HepG2 (cell line): ENCODE measurements at regions of chr6 and their contacts with region 1.

Region 1: GRCh38 chr6:167291623-167292300 is 647 bp downstream of the UNC93A start:
- DNase-seq: peak; percentile 77
- ATAC-seq: peak; percentile 48
- H3K4me3 ChIP-seq: peak overlapping the region; percentile 38 to 53 (median 38); a peak in 4 of 6 replicates
- H3K27ac ChIP-seq: peak overlapping the region; percentile 77
- H3K4me1 ChIP-seq: peaks cover 75% of the 10 kb centered on the region
- H3K27me3 ChIP-seq: no peaks in the 10 kb centered on the region
- CTCF ChIP-seq: peak; percentile 34; the same call in 1 of the 2 replicates
- EP300 ChIP-seq: peak in 1 of 2 experiments; percentile 63; a peak in 1 of 4 replicates
- POLR2A ChIP-seq: no peak; a peak in 1 of 4 replicates
- RAD21 ChIP-seq: peak; percentile 15

Region 2: DNA sequence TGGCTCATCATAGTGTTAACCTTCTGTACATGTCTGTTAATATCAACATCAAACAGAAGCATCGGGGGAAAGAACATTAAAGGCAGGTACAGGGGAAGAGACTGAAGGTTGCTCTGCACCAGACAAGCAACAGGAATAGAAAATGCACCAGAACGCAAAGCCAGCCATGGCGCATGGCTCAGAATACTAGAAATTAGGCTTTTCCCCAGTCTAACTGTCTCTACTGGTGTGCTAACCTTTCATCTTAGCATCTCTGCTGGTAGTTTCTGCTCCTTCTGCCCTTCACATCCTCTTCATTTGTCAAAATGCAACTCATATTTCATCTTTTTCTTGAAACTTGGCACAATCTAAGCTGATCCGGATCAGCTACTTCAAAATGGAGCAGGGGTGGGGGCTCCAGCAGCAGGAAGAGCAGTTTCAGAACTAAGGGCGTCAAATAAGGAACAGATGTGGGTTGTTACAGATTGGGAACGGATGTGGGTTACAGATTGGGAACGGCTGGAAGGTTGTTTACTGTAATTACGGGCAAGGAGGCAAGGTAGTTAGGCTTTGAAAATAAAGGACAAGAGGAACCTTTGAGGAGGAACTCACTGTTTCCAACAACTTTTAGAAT is 322.3 kb before region 1 on chr6:
- CTCF ChIA-PET with region 1: no interaction called
- POLR2A ChIA-PET with region 1: no interaction called
- in situ Hi-C with region 1: no loop called
- intact Hi-C with region 1: no loop called
- DNase-seq: no peak
- ATAC-seq: no peak
- H3K4me3 ChIP-seq: no peak overlapping the region
- H3K27ac ChIP-seq: no peak overlapping the region
- H3K4me1 ChIP-seq: peaks cover 1% of the 10 kb centered on the region
- H3K27me3 ChIP-seq: no peaks in the 10 kb centered on the region
- CTCF ChIP-seq: no peak
- EP300 ChIP-seq: no peak
- POLR2A ChIP-seq: no peak
- RAD21 ChIP-seq: no peak

Region 3: DNA sequence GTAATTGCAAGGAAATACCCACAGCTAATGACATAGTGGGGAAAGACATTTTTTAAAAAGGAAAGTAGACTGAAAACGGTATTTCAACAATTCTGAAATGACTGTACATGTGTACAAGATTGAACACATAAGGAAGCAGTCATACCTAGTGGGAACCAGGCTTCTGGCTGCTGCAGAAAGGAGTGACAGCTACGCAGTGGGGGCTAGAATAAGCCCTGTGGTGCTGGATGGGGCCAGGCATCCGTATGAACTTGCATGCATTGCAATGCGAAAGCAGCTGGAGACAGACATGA is 79.1 kb before region 1 on chr6:
- CTCF ChIA-PET with region 1: interaction called, 19 read pairs
- POLR2A ChIA-PET with region 1: interaction called, 22 read pairs
- in situ Hi-C with region 1: no loop called
- intact Hi-C with region 1: no loop called
- DNase-seq: no peak
- ATAC-seq: no peak
- H3K4me3 ChIP-seq: no peak overlapping the region
- H3K27ac ChIP-seq: no peak overlapping the region
- H3K4me1 ChIP-seq: peaks cover 81% of the 10 kb centered on the region
- H3K27me3 ChIP-seq: no peaks in the 10 kb centered on the region
- CTCF ChIP-seq: no peak
- EP300 ChIP-seq: no peak
- POLR2A ChIP-seq: no peak
- RAD21 ChIP-seq: no peak

Region 4: GRCh38 chr6:167244064-167244960 is 47.5 kb before region 1 on chr6:
- CTCF ChIA-PET with region 1: no interaction called
- POLR2A ChIA-PET with region 1: no interaction called
- in situ Hi-C with region 1: no loop called
- intact Hi-C with region 1: no loop called
- DNase-seq: no peak
- ATAC-seq: no peak
- H3K4me3 ChIP-seq: no peak overlapping the region
- H3K27ac ChIP-seq: no peak overlapping the region
- H3K4me1 ChIP-seq: peaks cover 78% of the 10 kb centered on the region
- H3K27me3 ChIP-seq: no peaks in the 10 kb centered on the region
- CTCF ChIP-seq: no peak
- EP300 ChIP-seq: no peak
- POLR2A ChIP-seq: no peak
- RAD21 ChIP-seq: no peak

Region 5: DNA sequence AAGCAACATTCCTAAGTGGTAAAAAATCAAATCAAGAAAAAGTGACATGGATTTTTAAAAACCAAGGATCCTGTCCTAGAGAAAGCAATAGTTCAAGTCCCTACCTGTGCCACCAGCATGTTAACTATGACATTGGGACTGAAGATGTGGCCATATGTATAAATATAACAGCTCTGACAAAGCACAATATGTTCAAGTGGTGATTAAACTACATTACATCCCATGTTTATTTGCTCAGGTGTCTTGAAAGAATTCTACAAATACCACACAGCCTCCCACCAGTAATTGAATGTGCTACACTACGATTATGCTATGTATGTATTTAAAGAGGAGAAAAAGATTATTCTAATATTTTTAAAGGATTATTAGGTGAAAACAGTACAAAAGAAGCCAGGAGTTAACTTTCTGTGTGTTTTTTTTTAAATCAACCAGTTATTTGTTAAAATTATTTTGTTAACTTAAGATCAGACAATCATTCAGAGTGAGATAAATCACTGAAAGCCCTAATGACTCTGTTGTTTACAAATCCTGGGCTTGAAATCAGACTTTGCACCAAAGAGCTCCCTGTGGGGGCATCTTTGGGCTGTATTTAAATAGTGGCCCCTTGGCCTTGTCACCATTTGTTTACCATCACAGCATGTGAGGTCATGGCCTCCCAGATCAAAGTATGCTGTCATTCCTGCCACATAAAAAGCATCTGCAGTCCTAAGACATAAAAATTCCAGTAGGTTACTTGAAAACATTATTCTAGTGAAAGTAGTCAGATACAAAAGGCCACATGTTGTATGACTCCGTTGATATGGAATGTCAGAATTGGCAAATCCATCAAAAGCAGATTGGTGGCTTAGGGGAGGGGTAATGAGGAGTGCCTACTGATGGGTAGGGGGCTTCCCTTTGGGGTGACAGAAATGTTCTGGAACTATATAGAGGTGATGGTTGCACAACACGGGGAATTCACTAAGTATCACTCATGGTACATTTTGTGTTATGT is 50.2 kb after region 1 on chr6:
- CTCF ChIA-PET with region 1: no interaction called
- POLR2A ChIA-PET with region 1: interaction called, 57 read pairs
- in situ Hi-C with region 1: no loop called
- intact Hi-C with region 1: loop called (anchors 1 kb)
- DNase-seq: peak; percentile 100
- ATAC-seq: peak; percentile 91
- H3K4me3 ChIP-seq: peak overlapping the region in 1 of 3 experiments; percentile 14; a peak in 1 of 6 replicates
- H3K27ac ChIP-seq: peak overlapping the region; percentile 79
- H3K4me1 ChIP-seq: peaks cover 81% of the 10 kb centered on the region
- H3K27me3 ChIP-seq: no peaks in the 10 kb centered on the region
- CTCF ChIP-seq: 0 out of 2 replicates have a peak, but pooled peaks have one; percentile 20
- EP300 ChIP-seq: peak; percentile 99 to 100
- POLR2A ChIP-seq: 0 out of 4 replicates have a peak, but pooled peaks of 1 of the 2 experiments have one; percentile 24
- RAD21 ChIP-seq: peak; percentile 15; the same call in 1 of the 2 replicates

Region 6: GRCh38 chr6:167356874-167357273 is 65.1 kb after region 1 on chr6:
- CTCF ChIA-PET with region 1: no interaction called
- POLR2A ChIA-PET with region 1: no interaction called
- in situ Hi-C with region 1: no loop called
- intact Hi-C with region 1: loop called (anchors 5 kb)
- DNase-seq: no peak
- ATAC-seq: no peak
- H3K4me3 ChIP-seq: no peak overlapping the region
- H3K27ac ChIP-seq: no peak overlapping the region
- H3K4me1 ChIP-seq: no peaks in the 10 kb centered on the region
- H3K27me3 ChIP-seq: no peaks in the 10 kb centered on the region
- CTCF ChIP-seq: no peak
- EP300 ChIP-seq: no peak
- POLR2A ChIP-seq: no peak
- RAD21 ChIP-seq: no peak

Region 7: GRCh38 chr6:167409694-167410093 is 117.9 kb after region 1 on chr6:
- CTCF ChIA-PET with region 1: no interaction called
- POLR2A ChIA-PET with region 1: no interaction called
- in situ Hi-C with region 1: no loop called
- intact Hi-C with region 1: no loop called
- DNase-seq: no peak
- ATAC-seq: no peak
- H3K4me3 ChIP-seq: no peak overlapping the region
- H3K27ac ChIP-seq: no peak overlapping the region
- H3K4me1 ChIP-seq: peaks cover 74% of the 10 kb centered on the region
- H3K27me3 ChIP-seq: peaks cover 18 to 62% of the 10 kb centered on the region in 2 experiments; a peak in 4 of 5 replicates
- CTCF ChIP-seq: no peak
- EP300 ChIP-seq: no peak
- POLR2A ChIP-seq: no peak
- RAD21 ChIP-seq: no peak